ENCODE measurements at regions of chr11 and their contacts with region 1.

Region 1: GRCh38 chr11:13949876-13950275 is 12.6 kb upstream of the SPON1 start:
- DNase-seq: no peak
- ATAC-seq: no peak
- H3K4me3 ChIP-seq: no peak overlapping the region
- H3K4me3 Mint-ChIP-seq: no peak overlapping the region
- H3K27ac ChIP-seq: no peak overlapping the region
- H3K27ac Mint-ChIP-seq: no peak overlapping the region
- H3K4me1 ChIP-seq: no peaks in the 10 kb centered on the region
- H3K4me1 Mint-ChIP-seq: peaks cover 18% of the 10 kb centered on the region
- H3K27me3 ChIP-seq: no peaks in the 10 kb centered on the region
- H3K27me3 Mint-ChIP-seq: no peaks in the 10 kb centered on the region
- CTCF ChIP-seq: no peak

Region 2: DNA sequence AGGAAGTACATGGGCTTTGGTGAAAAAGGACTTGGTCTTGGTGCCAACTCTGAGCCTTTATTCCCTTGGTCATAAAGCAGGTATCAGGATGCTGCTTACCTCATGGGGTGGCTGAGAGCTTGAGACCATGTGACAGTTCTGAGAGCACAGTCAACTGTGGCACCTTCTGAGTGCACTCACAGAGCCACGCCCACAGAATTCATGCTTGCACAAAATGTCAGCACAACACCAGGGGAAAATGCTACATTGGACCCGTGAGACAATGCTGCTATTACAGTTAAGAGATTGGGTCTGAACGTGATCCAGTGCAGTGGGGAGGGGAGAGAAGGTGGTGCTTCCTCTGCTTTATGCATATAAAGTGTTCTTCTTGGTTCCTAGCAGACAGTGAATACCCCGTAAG is 66.8 kb before region 1 on chr11:
- CTCF ChIA-PET with region 1: no interaction called
- POLR2A ChIA-PET with region 1: no interaction called
- intact Hi-C with region 1: loop called in 1 of 2 experiments (anchors 5 kb)
- DNase-seq: no peak
- ATAC-seq: peak; percentile 68
- H3K4me3 ChIP-seq: no peak overlapping the region
- H3K4me3 Mint-ChIP-seq: no peak overlapping the region
- H3K27ac ChIP-seq: no peak overlapping the region
- H3K27ac Mint-ChIP-seq: no peak overlapping the region
- H3K4me1 ChIP-seq: no peaks in the 10 kb centered on the region
- H3K4me1 Mint-ChIP-seq: peaks cover 8% of the 10 kb centered on the region
- H3K27me3 ChIP-seq: no peaks in the 10 kb centered on the region
- H3K27me3 Mint-ChIP-seq: no peaks in the 10 kb centered on the region
- CTCF ChIP-seq: no peak

Region 3: DNA sequence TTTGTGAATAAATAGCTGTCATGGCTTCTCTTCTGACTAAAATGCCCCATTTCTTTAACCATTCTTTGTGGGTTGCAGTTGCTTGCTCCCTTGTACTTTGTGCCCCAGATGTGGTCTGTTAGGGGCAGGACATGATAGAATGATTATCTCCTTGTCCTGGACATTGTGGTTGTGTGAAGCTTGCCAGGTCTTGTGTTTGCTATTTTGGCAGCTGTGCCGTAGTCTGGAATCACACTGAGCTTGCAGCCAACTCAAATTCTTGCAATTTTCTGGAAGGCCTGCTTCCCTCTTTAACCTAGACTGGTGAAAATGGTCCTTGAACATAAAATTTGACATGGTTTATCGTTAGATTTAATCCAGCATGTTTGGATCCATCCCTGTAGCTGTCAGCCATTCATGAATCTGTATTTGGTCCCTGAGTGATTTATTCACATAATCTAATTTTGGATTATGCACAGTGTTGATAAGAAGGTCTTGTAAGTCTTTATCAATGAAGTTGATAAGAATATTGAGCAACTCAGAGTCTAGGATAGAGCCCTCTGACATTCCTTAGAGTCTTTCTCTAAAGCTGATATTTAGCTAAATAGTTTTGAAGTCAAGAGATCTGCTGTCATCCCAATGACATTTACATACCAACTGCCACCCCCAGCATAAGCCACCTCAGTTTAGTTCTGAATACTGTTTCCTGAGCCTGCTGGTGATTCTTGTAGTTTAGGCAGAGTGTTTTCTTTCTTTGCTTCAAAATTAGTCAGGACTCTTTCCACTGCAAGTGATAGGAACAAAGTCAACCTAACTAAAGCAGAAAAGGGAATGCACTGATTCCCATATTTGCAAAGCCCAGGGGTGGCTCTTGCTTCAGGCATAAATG is 22.4 kb after region 1 on chr11:
- CTCF ChIA-PET with region 1: no interaction called
- POLR2A ChIA-PET with region 1: no interaction called
- intact Hi-C with region 1: no loop called
- DNase-seq: no peak
- ATAC-seq: no peak
- H3K4me3 ChIP-seq: no peak overlapping the region
- H3K4me3 Mint-ChIP-seq: no peak overlapping the region
- H3K27ac ChIP-seq: no peak overlapping the region
- H3K27ac Mint-ChIP-seq: no peak overlapping the region
- H3K4me1 ChIP-seq: no peaks in the 10 kb centered on the region
- H3K4me1 Mint-ChIP-seq: no peaks in the 10 kb centered on the region
- H3K27me3 ChIP-seq: no peaks in the 10 kb centered on the region
- H3K27me3 Mint-ChIP-seq: peaks cover 6% of the 10 kb centered on the region
- CTCF ChIP-seq: no peak

Measured in CD4-positive, alpha-beta T cell (primary cell).